Esophagus muscularis mucosa (tissue), 4 donors: ENCODE measurements at regions of chr2 and their contacts with region 1.

Region 1: GRCh38 chr2:74334931-74335333 is 8.3 kb downstream of the SLC4A5 start:
- DNase-seq: no peak
- H3K4me3 ChIP-seq: no peak overlapping the region
- H3K27ac ChIP-seq: no peak overlapping the region
- H3K4me1 ChIP-seq: no peaks in the 10 kb centered on the region
- H3K27me3 ChIP-seq: no peaks in the 10 kb centered on the region
- CTCF ChIP-seq: peak; percentile 80 to 95 (median 84)
- EP300 ChIP-seq: no peak
- POLR2A ChIP-seq: no peak

Region 2: GRCh38 chr2:73828818-73829570 is 505.9 kb before region 1 on chr2 and contains the start of gene STAMBP:
- intact Hi-C with region 1: loop called (anchors 10 kb)
- DNase-seq: peak; percentile 99
- H3K4me3 ChIP-seq: peak within 1 kb of the TSS; percentile 69 to 87 (median 82)
- H3K27ac ChIP-seq: peak within 1 kb of the TSS; percentile 93 to 98 (median 96)
- H3K4me1 ChIP-seq: peaks cover 9 to 64% (median 59%) of the 10 kb centered on the region in 4 donors
- H3K27me3 ChIP-seq: no peaks in the 10 kb centered on the region
- CTCF ChIP-seq: no peak
- EP300 ChIP-seq: no peak
- POLR2A ChIP-seq: peak; percentile 76
- total RNA-seq, gene STAMBP: 32.3 to 73.8 (median 34.1) TPM

Region 3: GRCh38 chr2:74232426-74232825 is 102.5 kb before region 1 on chr2:
- intact Hi-C with region 1: no loop called
- DNase-seq: no peak
- H3K4me3 ChIP-seq: no peak overlapping the region
- H3K27ac ChIP-seq: no peak overlapping the region
- H3K4me1 ChIP-seq: no peaks in the 10 kb centered on the region
- H3K27me3 ChIP-seq: no peaks in the 10 kb centered on the region
- CTCF ChIP-seq: no peak
- EP300 ChIP-seq: no peak
- POLR2A ChIP-seq: no peak

Region 4: DNA sequence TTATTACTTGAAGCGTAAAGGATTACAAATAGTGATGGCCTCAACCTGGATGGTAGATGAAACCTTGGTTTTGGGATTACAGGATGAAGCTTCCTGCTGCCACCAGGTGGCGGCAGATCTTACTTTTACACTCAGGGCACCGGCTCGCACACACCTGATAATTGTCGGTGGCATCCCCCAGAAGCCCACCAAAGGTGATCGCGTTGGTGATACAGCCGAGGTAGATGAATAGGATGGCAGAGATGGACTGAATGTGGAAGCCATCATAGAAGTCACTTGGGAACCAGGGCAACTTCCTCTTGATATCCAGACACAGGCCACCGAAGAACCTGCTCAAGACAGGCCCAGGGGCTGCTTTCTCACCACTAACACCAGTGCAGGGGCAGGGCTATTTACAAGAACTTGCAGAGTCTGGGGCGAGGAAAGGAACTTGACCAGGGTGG is 84.7 kb before region 1 on chr2:
- intact Hi-C with region 1: loop called (anchors 5 kb)
- DNase-seq: no peak
- H3K4me3 ChIP-seq: no peak overlapping the region
- H3K27ac ChIP-seq: no peak overlapping the region
- H3K4me1 ChIP-seq: no peaks in the 10 kb centered on the region
- H3K27me3 ChIP-seq: no peaks in the 10 kb centered on the region
- CTCF ChIP-seq: peak; percentile 69 to 76 (median 70)
- EP300 ChIP-seq: no peak
- POLR2A ChIP-seq: no peak

Region 5: GRCh38 chr2:74391580-74392448 is 56.9 kb after region 1 on chr2:
- intact Hi-C with region 1: loop called (anchors 10 kb)
- DNase-seq: peak; percentile 97
- H3K4me3 ChIP-seq: peak overlapping the region; percentile 70 to 94 (median 84)
- H3K27ac ChIP-seq: peak overlapping the region; percentile 88 to 93 (median 91)
- H3K4me1 ChIP-seq: peaks cover 40 to 49% (median 47%) of the 10 kb centered on the region in 4 donors
- H3K27me3 ChIP-seq: no peaks in the 10 kb centered on the region
- CTCF ChIP-seq: peak; percentile 98
- EP300 ChIP-seq: no peak
- POLR2A ChIP-seq: peak; percentile 47